ENCODE measurements at regions of chr1 and their contacts with region 1.

Region 1: DNA sequence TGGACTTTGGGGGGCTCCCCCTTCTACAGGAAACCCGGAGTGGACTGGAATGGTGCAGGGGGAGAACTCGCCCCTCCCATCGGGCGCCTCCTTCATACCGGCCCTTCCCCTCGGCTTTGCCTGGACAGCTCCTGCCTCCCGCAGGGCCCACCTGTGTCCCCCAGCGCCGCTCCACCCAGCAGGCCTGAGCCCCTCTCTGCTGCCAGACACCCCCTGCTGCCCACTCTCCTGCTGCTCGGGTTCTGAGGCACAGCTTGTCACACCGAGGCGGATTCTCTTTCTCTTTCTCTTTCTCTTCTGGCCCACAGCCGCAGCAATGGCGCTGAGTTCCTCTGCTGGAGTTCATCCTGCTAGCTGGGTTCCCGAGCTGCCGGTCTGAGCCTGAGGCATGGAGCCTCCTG is at the start of gene TNFRSF14:
- DNase-seq: peak; percentile 54 to 90 (median 62)
- ATAC-seq: peak; percentile 79
- H3K4me3 ChIP-seq: peak within 1 kb of the TSS; percentile 99
- H3K4me3 Mint-ChIP-seq: peak within 1 kb of the TSS; percentile 97
- H3K27ac ChIP-seq: peak within 1 kb of the TSS; percentile 96
- H3K27ac Mint-ChIP-seq: peak within 1 kb of the TSS; percentile 98
- H3K4me1 ChIP-seq: peaks cover 59% of the 10 kb centered on the region
- H3K4me1 Mint-ChIP-seq: peaks cover 35% of the 10 kb centered on the region
- H3K27me3 ChIP-seq: no peaks in the 10 kb centered on the region
- H3K27me3 Mint-ChIP-seq: no peaks in the 10 kb centered on the region
- CTCF ChIP-seq: peak; percentile 24
- total RNA-seq, gene TNFRSF14: 191 to 194 TPM

Region 2: DNA sequence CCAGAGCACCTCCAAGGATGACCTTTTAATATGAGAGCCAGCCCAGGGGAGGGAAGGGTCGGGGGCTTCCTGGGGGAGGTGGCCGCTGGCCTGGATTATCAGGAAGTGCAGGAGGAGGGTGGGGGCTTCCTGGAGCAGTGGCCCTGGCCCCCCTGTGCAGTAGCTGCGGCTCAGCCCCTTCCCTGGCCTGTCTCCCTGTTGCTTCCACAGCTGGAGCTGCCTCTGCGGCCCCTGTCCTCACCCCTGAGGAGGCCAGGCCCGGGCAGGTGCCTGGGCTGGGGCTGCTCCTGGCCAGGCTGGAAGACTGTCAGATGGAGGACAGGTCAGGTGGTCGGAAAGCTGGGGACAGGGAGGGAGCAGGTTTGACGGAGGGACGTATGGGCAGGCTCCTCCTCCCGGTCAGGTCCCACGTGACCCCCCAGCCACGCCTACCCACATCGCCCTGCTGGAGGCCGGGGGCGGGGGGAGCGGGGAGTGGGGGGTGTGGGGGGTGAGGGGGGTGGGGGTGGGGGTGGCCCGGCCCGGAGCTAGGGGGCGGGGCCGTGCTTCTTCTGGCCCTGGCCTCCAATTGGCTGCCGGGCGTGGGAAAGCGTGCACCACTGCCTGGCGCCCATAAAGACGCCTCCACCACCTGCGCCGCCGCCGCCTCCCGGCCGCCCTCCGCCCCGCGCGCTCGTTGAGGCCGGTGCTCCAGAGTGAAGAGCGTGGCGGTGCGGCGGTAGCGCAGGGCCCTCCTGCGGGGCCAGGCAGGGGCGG is 10.3 kb before region 1 on chr1:
- CTCF ChIA-PET with region 1: interaction called, 6 read pairs
- POLR2A ChIA-PET with region 1: interaction called, 42 read pairs
- intact Hi-C with region 1: no loop called
- DNase-seq: peak; percentile 82 to 97 (median 88)
- ATAC-seq: peak; percentile 45
- H3K4me3 ChIP-seq: peak overlapping the region; percentile 81
- H3K4me3 Mint-ChIP-seq: peak overlapping the region; percentile 95
- H3K27ac ChIP-seq: peak overlapping the region; percentile 96 to 99
- H3K27ac Mint-ChIP-seq: peak overlapping the region; percentile 99
- H3K4me1 ChIP-seq: peaks cover 70% of the 10 kb centered on the region
- H3K4me1 Mint-ChIP-seq: peaks cover 38% of the 10 kb centered on the region
- H3K27me3 ChIP-seq: peaks cover 0 to 2% of the 10 kb centered on the region in 2 experiments
- H3K27me3 Mint-ChIP-seq: no peaks in the 10 kb centered on the region
- CTCF ChIP-seq: no peak

Region 3: GRCh38 chr1:2575801-2576663 is 19.8 kb after region 1 on chr1:
- CTCF ChIA-PET with region 1: interaction called, 18 read pairs
- POLR2A ChIA-PET with region 1: interaction called, 30 read pairs
- intact Hi-C with region 1: loop called in 1 of 2 experiments (anchors 1 kb)
- DNase-seq: peak in 1 of 14 experiments; percentile 40
- ATAC-seq: no peak
- H3K4me3 ChIP-seq: no peak overlapping the region
- H3K4me3 Mint-ChIP-seq: no peak overlapping the region
- H3K27ac ChIP-seq: no peak overlapping the region
- H3K27ac Mint-ChIP-seq: peak overlapping the region; percentile 49
- H3K4me1 ChIP-seq: peaks cover 55% of the 10 kb centered on the region
- H3K4me1 Mint-ChIP-seq: peaks cover 44% of the 10 kb centered on the region
- H3K27me3 ChIP-seq: no peaks in the 10 kb centered on the region
- H3K27me3 Mint-ChIP-seq: no peaks in the 10 kb centered on the region
- CTCF ChIP-seq: no peak

Region 4: GRCh38 chr1:2786329-2787162 is 230.3 kb after region 1 on chr1:
- CTCF ChIA-PET with region 1: no interaction called
- POLR2A ChIA-PET with region 1: interaction called, 3 read pairs
- intact Hi-C with region 1: loop called in 1 of 2 experiments (anchors 1 kb)
- DNase-seq: peak; percentile 59 to 83 (median 73)
- ATAC-seq: peak; percentile 76
- H3K4me3 ChIP-seq: no peak overlapping the region
- H3K4me3 Mint-ChIP-seq: no peak overlapping the region
- H3K27ac ChIP-seq: no peak overlapping the region
- H3K27ac Mint-ChIP-seq: no peak overlapping the region
- H3K4me1 ChIP-seq: peaks cover 19% of the 10 kb centered on the region
- H3K4me1 Mint-ChIP-seq: peaks cover 11% of the 10 kb centered on the region
- H3K27me3 ChIP-seq: peaks cover 33 to 40% of the 10 kb centered on the region in 2 experiments
- H3K27me3 Mint-ChIP-seq: peaks cover 41% of the 10 kb centered on the region
- CTCF ChIP-seq: peak; percentile 76

Region 5: DNA sequence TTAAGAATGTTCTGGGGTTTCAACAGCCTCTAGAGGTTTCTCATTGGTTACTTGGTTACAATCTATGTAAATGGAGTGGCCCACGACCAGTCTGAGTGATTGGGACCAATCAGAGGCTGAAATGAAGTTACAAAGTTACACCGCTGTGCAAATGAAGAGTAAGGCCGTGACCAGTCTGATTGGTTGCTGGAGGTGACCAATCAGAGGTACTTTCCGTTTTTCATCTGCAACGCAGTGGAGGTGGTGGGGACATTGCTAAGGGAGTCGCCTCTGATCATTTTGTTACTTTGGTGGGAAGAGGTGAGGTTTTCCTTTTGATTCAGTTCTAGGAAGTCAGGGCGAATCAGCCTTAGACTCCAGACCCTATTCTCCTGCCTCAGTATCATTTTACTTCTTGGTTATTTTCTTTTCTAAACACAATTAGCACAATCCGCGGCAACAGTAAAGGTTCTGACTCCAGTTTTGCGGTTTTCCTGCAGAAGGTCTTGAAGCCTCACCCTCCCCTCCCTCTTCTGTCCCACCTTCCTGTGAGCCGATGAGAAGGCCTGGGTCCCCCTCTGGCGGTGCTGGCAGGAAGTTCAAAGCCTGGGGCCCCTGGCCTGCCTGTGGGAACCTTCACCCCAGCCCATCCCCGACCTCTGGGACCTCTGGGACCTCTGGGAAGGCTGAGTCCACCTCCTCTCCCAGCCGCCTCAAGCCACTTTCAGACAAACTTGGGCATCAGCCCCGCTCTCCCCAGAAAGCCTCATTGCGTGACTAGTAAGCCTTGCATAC is 283.9 kb after region 1 on chr1:
- CTCF ChIA-PET with region 1: no interaction called
- POLR2A ChIA-PET with region 1: no interaction called
- intact Hi-C with region 1: loop called in 1 of 2 experiments (anchors 1 kb)
- DNase-seq: peak; percentile 52 to 86 (median 68)
- ATAC-seq: peak; percentile 89
- H3K4me3 ChIP-seq: peak overlapping the region; percentile 35
- H3K4me3 Mint-ChIP-seq: peak overlapping the region; percentile 83
- H3K27ac ChIP-seq: peak overlapping the region; percentile 11 to 55
- H3K27ac Mint-ChIP-seq: peak overlapping the region; percentile 85
- H3K4me1 ChIP-seq: peaks cover 17% of the 10 kb centered on the region
- H3K4me1 Mint-ChIP-seq: peaks cover 23% of the 10 kb centered on the region
- H3K27me3 ChIP-seq: no peaks in the 10 kb centered on the region
- H3K27me3 Mint-ChIP-seq: no peaks in the 10 kb centered on the region
- CTCF ChIP-seq: peak; percentile 84

Measured in CD4-positive, alpha-beta T cell (primary cell).